Common myeloid progenitor, CD34-positive (primary cell): ENCODE measurements at regions of chr18 and their contacts with region 1.

Region 1: DNA sequence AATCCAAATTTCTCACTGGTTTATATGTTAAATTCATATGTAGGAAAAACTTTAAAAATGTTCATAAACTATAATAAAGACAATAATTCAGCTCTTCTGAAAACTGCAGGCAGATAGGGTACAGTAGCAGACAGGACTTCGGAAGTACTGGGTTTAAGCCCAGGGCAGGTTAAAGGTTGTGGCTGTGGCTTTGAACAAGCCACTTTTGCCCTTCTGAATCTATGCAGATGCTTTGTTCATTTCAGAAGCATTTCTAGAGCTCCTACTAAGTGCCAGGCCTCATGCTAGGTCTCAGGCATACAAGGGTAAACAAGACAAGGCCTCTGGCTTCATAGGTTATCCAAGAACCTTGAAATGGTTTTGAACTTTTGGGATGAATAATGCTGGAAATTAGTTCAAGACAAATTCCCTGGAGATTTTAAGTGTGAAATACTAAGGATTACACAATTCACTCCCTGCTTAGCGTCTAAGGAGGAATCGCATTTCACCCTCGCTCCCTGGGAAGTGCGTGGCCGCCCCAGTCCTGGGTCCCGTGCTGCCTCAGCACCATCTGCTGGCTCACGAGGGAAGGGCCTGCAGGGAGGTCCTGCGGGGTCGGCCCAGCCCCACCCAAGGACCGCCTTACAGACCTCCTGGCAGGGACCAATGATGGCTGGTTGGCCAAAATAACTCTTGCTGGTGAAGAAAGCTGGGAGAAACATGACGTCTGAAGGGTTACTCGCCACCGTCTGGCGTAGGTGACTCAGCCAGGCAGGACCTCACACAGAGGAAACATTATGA is 67.7 kb upstream of the L3MBTL4 start:
- DNase-seq: peak; percentile 53 to 66 (median 62)
- H3K4me3 ChIP-seq: no peak overlapping the region
- H3K27ac ChIP-seq: no peak overlapping the region
- H3K4me1 ChIP-seq: no peaks in the 10 kb centered on the region
- H3K27me3 ChIP-seq: peaks cover 0 to 10% (median 5%) of the 10 kb centered on the region in 5 experiments

Region 2: GRCh38 chr18:5868218-5869115 is 613.9 kb before region 1 on chr18:
- CTCF ChIA-PET with region 1: interaction called, 17 read pairs
- POLR2A ChIA-PET with region 1: no interaction called
- DNase-seq: peak; percentile 86 to 96 (median 94)
- H3K4me3 ChIP-seq: no peak overlapping the region
- H3K27ac ChIP-seq: no peak overlapping the region
- H3K4me1 ChIP-seq: no peaks in the 10 kb centered on the region
- H3K27me3 ChIP-seq: peaks cover 0 to 6% (median 2%) of the 10 kb centered on the region in 5 experiments

Region 3: GRCh38 chr18:6525604-6526003 is 43.2 kb after region 1 on chr18:
- CTCF ChIA-PET with region 1: no interaction called
- POLR2A ChIA-PET with region 1: no interaction called
- DNase-seq: no peak
- H3K4me3 ChIP-seq: no peak overlapping the region
- H3K27ac ChIP-seq: no peak overlapping the region
- H3K4me1 ChIP-seq: no peaks in the 10 kb centered on the region
- H3K27me3 ChIP-seq: no peaks in the 10 kb centered on the region